A549 (cell line): ENCODE measurements at regions of chr5 and their contacts with region 1.

Region 1: DNA sequence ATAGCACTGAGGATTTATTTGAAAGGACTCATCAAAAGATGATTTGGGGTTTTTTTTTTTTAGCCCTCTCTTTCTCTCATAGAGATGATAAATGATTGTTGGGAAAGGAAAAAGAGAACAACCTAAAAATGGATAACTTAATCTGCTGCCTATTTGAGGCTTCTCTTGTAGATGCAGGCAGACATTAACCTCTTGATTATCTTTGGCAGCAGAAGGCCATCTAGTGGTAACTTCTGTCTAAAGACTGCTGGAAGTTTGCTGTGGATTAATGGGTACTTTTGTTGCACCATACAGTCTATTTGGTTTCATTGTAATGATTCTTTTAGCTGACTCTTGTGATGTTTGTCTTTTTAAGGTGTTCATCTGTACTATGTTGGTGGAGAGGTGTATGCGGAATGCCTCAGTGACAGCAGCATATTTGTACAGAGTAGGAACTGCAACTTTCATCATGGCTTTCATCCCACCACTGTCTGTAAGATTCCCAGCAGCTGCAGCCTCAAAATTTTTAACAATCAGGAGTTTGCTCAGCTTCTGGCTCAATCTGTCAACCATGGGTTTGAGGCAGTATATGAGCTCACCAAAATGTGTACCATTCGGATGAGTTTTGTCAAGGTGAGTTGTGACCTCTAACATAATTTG is 18.8 kb downstream of the SMIM32 start:
- DNase-seq: peak; percentile 55 to 72
- ATAC-seq: peak; percentile 96 to 97
- H3K4me3 ChIP-seq: no peak overlapping the region
- H3K27ac ChIP-seq: no peak overlapping the region
- H3K4me1 ChIP-seq: no peaks in the 10 kb centered on the region
- CTCF ChIP-seq: peak; percentile 88
- EP300 ChIP-seq: no peak
- POLR2A ChIP-seq: no peak
- RAD21 ChIP-seq: peak; percentile 81 to 82

Region 2: GRCh38 chr5:135880278-135880677 is 293.9 kb before region 1 on chr5:
- CTCF ChIA-PET with region 1: interaction called, 27 read pairs
- POLR2A ChIA-PET with region 1: no interaction called
- DNase-seq: peak; percentile 55 to 68
- ATAC-seq: peak; percentile 76 to 95
- H3K4me3 ChIP-seq: no peak overlapping the region
- H3K27ac ChIP-seq: peak overlapping the region in 1 of 2 experiments; percentile 40; a peak in 1 of 6 replicates
- H3K4me1 ChIP-seq: peaks cover 11% of the 10 kb centered on the region
- CTCF ChIP-seq: peak; percentile 56
- EP300 ChIP-seq: no peak
- POLR2A ChIP-seq: no peak
- RAD21 ChIP-seq: peak; percentile 58 to 82

Region 3: GRCh38 chr5:135887351-135887864 is 286.7 kb before region 1 on chr5:
- CTCF ChIA-PET with region 1: interaction called, 44 read pairs
- POLR2A ChIA-PET with region 1: no interaction called
- DNase-seq: peak; percentile 74 to 78
- ATAC-seq: peak; percentile 92 to 97
- H3K4me3 ChIP-seq: no peak overlapping the region
- H3K27ac ChIP-seq: peak overlapping the region; percentile 9 to 65; a peak in 4 of 6 replicates
- H3K4me1 ChIP-seq: peaks cover 22% of the 10 kb centered on the region
- CTCF ChIP-seq: peak; percentile 98
- EP300 ChIP-seq: no peak
- POLR2A ChIP-seq: no peak
- RAD21 ChIP-seq: peak; percentile 97 to 98

Region 4: GRCh38 chr5:136099870-136100269 is 74.3 kb before region 1 on chr5:
- CTCF ChIA-PET with region 1: interaction called, 11 read pairs
- POLR2A ChIA-PET with region 1: no interaction called
- DNase-seq: no peak
- ATAC-seq: no peak
- H3K4me3 ChIP-seq: no peak overlapping the region
- H3K27ac ChIP-seq: no peak overlapping the region
- H3K4me1 ChIP-seq: peaks cover 3% of the 10 kb centered on the region
- CTCF ChIP-seq: no peak
- EP300 ChIP-seq: no peak
- POLR2A ChIP-seq: no peak
- RAD21 ChIP-seq: no peak

Region 5: GRCh38 chr5:136132557-136133221 is 41.5 kb before region 1 on chr5 and contains the start of gene SMAD5:
- CTCF ChIA-PET with region 1: interaction called, 19 read pairs
- POLR2A ChIA-PET with region 1: no interaction called
- DNase-seq: peak; percentile 95 to 96
- ATAC-seq: peak; percentile 93 to 95
- H3K4me3 ChIP-seq: peak within 1 kb of the TSS; percentile 93
- H3K27ac ChIP-seq: peak within 1 kb of the TSS; percentile 96 to 97
- H3K4me1 ChIP-seq: peaks cover 20% of the 10 kb centered on the region
- CTCF ChIP-seq: no peak
- EP300 ChIP-seq: no peak
- POLR2A ChIP-seq: peak; percentile 71
- RAD21 ChIP-seq: no peak
- polyA plus RNA-seq, gene SMAD5: 69.9 and 101 TPM in 2 replicates

Region 6: GRCh38 chr5:136153581-136154236 is 20.4 kb before region 1 on chr5:
- CTCF ChIA-PET with region 1: interaction called, 10 read pairs
- POLR2A ChIA-PET with region 1: no interaction called
- DNase-seq: no peak
- ATAC-seq: no peak
- H3K4me3 ChIP-seq: no peak overlapping the region
- H3K27ac ChIP-seq: no peak overlapping the region
- H3K4me1 ChIP-seq: peaks cover 32% of the 10 kb centered on the region
- CTCF ChIP-seq: no peak
- EP300 ChIP-seq: no peak
- POLR2A ChIP-seq: no peak
- RAD21 ChIP-seq: no peak

Region 7: DNA sequence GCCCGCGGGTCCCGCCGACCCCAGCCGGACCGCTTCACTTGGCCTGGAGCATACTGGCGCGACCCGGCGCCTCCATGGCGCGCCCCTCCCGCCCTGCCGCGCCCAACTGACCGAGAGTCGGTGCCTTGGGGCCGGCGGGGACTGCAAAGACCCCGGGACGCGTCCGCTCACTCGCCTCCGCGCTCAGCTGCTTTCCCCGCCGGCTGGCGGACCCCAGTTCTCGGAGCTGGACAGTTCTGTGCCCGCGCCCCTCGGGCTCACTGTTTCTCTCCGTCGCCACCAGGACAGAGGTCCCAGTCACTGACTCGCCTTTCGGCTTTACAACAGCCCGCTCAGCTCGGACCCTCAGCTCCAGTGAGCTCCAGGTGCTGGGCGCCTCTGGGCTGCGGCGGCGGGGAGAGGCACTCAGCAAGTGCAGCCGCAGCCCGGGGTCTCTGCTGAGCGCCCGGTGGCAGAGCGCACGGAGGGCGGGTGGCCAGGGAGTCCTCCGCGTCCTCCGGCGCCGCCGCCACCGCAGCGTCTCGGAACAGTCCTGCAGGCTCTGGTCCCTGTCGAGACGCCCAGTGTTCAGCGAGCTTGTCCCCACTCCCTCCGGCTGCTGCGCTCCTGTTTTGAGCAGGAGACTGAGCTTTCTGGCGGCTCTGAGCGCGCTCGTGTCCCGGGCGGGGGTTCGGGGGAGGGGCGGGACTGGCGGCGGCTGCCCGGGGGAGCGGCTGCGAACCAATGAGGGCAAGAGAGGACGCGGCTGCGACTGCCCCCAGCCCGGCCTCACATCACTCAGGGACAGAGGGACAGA is 18.6 kb after region 1 on chr5 and contains the start of gene SMIM32:
- CTCF ChIA-PET with region 1: interaction called, 13 read pairs
- POLR2A ChIA-PET with region 1: no interaction called
- DNase-seq: no peak
- ATAC-seq: no peak
- H3K4me3 ChIP-seq: no peak within 1 kb of the TSS
- H3K27ac ChIP-seq: no peak within 1 kb of the TSS
- H3K4me1 ChIP-seq: no peaks in the 10 kb centered on the region
- CTCF ChIP-seq: no peak
- EP300 ChIP-seq: no peak
- POLR2A ChIP-seq: no peak
- RAD21 ChIP-seq: no peak
- polyA plus RNA-seq, gene SMIM32: not detected in 2 replicates